GM12878 (cell line): ENCODE measurements at regions of chr1 and their contacts with region 1.

Region 1: GRCh38 chr1:212455803-212456528 is 23.2 kb downstream of the NENF start:
- DNase-seq: no peak
- ATAC-seq: peak; percentile 91
- H3K4me3 ChIP-seq: no peak overlapping the region
- H3K27ac ChIP-seq: no peak overlapping the region
- H3K4me1 ChIP-seq: no peaks in the 10 kb centered on the region
- H3K27me3 ChIP-seq: no peaks in the 10 kb centered on the region; a peak in 1 of 4 replicates
- CTCF ChIP-seq: peak; percentile 95 to 99 (median 96)
- EP300 ChIP-seq: no peak
- POLR2A ChIP-seq: no peak
- RAD21 ChIP-seq: peak; percentile 100

Region 2: DNA sequence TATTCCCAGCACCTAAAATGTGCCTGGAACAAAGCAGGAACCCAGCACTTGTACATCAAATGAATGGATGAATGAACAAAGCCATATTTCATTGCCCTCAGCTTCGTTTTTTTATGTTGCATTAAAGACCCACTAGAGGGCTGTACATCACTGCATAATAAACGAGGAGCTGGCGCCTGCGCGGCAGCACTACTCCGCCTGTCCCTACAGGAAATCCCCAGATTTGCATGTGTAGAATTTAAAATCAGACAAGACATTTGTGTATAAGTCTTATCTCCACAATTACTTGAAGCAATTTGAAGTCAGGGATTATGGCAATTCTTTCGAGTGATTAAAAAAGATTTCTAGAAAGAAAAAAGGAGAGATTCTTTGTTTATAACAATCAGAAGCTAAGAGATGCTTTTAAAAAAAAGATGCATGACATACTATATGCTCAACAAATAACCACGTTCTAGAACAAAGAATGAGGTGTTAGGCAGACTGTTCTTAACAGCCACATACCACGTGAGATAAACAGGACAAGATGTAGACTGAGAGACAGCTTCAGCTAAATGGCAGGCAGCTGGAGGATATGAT is 775.1 kb before region 1 on chr1:
- CTCF ChIA-PET with region 1: interaction called, 128 read pairs
- POLR2A ChIA-PET with region 1: no interaction called
- RAD21 ChIA-PET with region 1: interaction called, 105 read pairs
- SMC1A ChIA-PET with region 1: interaction called, 85 read pairs
- in situ Hi-C with region 1: loop called (anchors 5 kb)
- intact Hi-C with region 1: loop called (anchors 1 kb)
- DNase-seq: peak; percentile 80
- ATAC-seq: peak; percentile 84
- H3K4me3 ChIP-seq: no peak overlapping the region
- H3K27ac ChIP-seq: peak overlapping the region; percentile 38
- H3K4me1 ChIP-seq: peaks cover 16% of the 10 kb centered on the region
- H3K27me3 ChIP-seq: no peaks in the 10 kb centered on the region
- CTCF ChIP-seq: peak; percentile 66 to 87 (median 81); a peak in 5 of 6 replicates
- EP300 ChIP-seq: 0 out of 4 replicates have a peak, but pooled peaks of 1 of the 2 experiments have one; percentile 20
- POLR2A ChIP-seq: no peak
- RAD21 ChIP-seq: peak; percentile 88

Region 3: DNA sequence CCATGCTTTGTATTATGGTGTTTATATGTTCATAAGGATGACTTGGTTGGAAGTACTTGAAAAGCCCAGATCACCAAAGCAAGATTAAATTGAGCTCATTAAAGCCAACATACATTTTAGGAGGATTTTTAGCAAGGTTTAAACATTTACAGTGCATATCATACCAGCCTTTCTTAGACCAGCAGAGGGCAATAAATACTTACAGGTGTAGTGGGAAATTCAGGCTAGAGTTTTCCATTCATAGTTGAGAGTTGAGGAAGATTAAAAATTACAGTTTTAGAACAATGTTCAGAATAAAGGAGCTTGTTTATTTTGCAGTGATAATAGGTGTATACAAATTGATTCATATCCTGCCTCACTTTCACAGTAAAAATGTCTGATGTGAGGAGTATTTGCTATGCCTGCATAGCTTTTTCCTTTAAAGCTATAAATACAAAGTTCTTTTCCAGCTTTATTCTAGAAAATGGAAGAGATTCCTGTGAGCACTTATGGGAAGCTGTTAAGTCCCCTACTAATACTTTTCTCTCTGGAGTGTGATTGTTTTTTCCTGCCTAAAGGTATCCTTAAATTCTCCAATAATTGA is 385.2 kb before region 1 on chr1:
- CTCF ChIA-PET with region 1: interaction called, 270 read pairs
- POLR2A ChIA-PET with region 1: interaction called, 13 read pairs
- RAD21 ChIA-PET with region 1: interaction called, 197 read pairs
- SMC1A ChIA-PET with region 1: interaction called, 168 read pairs
- in situ Hi-C with region 1: no loop called
- intact Hi-C with region 1: loop called (anchors 2 kb)
- DNase-seq: no peak
- ATAC-seq: peak; percentile 63
- H3K4me3 ChIP-seq: no peak overlapping the region
- H3K27ac ChIP-seq: no peak overlapping the region
- H3K4me1 ChIP-seq: no peaks in the 10 kb centered on the region
- H3K27me3 ChIP-seq: no peaks in the 10 kb centered on the region
- CTCF ChIP-seq: peak; percentile 51 to 72 (median 54); a peak in 5 of 6 replicates
- EP300 ChIP-seq: no peak
- POLR2A ChIP-seq: no peak
- RAD21 ChIP-seq: peak; percentile 95

Region 4: GRCh38 chr1:212341090-212341489 is 114.9 kb before region 1 on chr1:
- CTCF ChIA-PET with region 1: interaction called, 16 read pairs
- POLR2A ChIA-PET with region 1: no interaction called
- RAD21 ChIA-PET with region 1: interaction called, 18 read pairs
- SMC1A ChIA-PET with region 1: interaction called, 12 read pairs
- in situ Hi-C with region 1: no loop called
- intact Hi-C with region 1: no loop called
- DNase-seq: no peak
- ATAC-seq: no peak
- H3K4me3 ChIP-seq: no peak overlapping the region
- H3K27ac ChIP-seq: no peak overlapping the region
- H3K4me1 ChIP-seq: no peaks in the 10 kb centered on the region
- H3K27me3 ChIP-seq: no peaks in the 10 kb centered on the region
- CTCF ChIP-seq: no peak
- EP300 ChIP-seq: no peak
- POLR2A ChIP-seq: no peak
- RAD21 ChIP-seq: no peak

Region 5: DNA sequence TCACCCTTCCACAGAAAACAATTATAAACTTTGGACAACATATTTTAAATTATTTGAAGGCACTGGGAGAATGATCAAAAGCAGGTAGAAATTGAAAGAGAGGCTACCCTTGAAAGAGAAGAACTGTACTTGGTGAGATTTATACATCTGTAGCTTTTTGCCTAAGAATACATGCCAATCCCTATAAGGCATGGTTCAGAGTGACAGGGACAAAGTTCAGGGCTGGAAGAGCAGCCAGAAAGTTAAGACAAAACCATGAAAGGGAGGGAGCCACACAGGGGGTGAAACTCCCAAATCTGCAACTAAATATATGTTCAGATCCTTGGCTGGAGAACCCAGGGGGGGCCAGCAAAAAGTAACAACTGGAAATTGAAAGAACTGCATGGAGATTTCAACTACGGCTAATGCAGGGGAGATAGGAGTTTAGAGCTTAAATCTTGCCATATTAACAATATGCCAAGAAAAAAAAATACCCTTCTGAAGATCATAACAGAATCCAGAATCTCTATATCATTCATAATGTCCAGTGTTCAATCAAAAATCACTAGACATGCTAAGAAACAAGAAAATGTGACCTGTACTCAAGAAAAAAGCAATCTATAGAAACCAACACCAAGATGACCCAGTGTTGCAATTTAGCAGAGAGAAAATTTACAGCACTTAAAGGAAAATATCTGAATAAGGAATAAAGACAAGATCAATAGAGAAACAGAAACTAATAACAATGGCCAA is 66.8 kb before region 1 on chr1:
- CTCF ChIA-PET with region 1: interaction called, 14 read pairs
- POLR2A ChIA-PET with region 1: no interaction called
- RAD21 ChIA-PET with region 1: interaction called, 7 read pairs
- SMC1A ChIA-PET with region 1: interaction called, 9 read pairs
- in situ Hi-C with region 1: no loop called
- intact Hi-C with region 1: no loop called
- DNase-seq: no peak
- ATAC-seq: no peak
- H3K4me3 ChIP-seq: no peak overlapping the region
- H3K27ac ChIP-seq: no peak overlapping the region
- H3K4me1 ChIP-seq: no peaks in the 10 kb centered on the region
- H3K27me3 ChIP-seq: no peaks in the 10 kb centered on the region
- CTCF ChIP-seq: no peak
- EP300 ChIP-seq: no peak
- POLR2A ChIP-seq: no peak
- RAD21 ChIP-seq: no peak

Region 6: GRCh38 chr1:212488397-212489283 is 32.7 kb after region 1 on chr1:
- CTCF ChIA-PET with region 1: interaction called, 10 read pairs
- POLR2A ChIA-PET with region 1: no interaction called
- RAD21 ChIA-PET with region 1: interaction called, 4 read pairs
- SMC1A ChIA-PET with region 1: no interaction called
- in situ Hi-C with region 1: no loop called
- intact Hi-C with region 1: no loop called
- DNase-seq: no peak
- ATAC-seq: peak; percentile 84
- H3K4me3 ChIP-seq: no peak overlapping the region
- H3K27ac ChIP-seq: no peak overlapping the region
- H3K4me1 ChIP-seq: no peaks in the 10 kb centered on the region
- H3K27me3 ChIP-seq: no peaks in the 10 kb centered on the region
- CTCF ChIP-seq: no peak
- EP300 ChIP-seq: peak in 1 of 2 experiments; percentile 63; a peak in 1 of 4 replicates
- POLR2A ChIP-seq: no peak
- RAD21 ChIP-seq: no peak

Region 7: GRCh38 chr1:212994926-212995325 is 539.0 kb after region 1 on chr1:
- CTCF ChIA-PET with region 1: interaction called, 12 read pairs
- POLR2A ChIA-PET with region 1: no interaction called
- RAD21 ChIA-PET with region 1: interaction called, 4 read pairs
- SMC1A ChIA-PET with region 1: interaction called, 7 read pairs
- in situ Hi-C with region 1: no loop called
- intact Hi-C with region 1: no loop called
- DNase-seq: no peak
- ATAC-seq: no peak
- H3K4me3 ChIP-seq: no peak overlapping the region
- H3K27ac ChIP-seq: no peak overlapping the region
- H3K4me1 ChIP-seq: no peaks in the 10 kb centered on the region
- H3K27me3 ChIP-seq: no peaks in the 10 kb centered on the region
- CTCF ChIP-seq: no peak
- EP300 ChIP-seq: no peak
- POLR2A ChIP-seq: no peak
- RAD21 ChIP-seq: no peak